Common myeloid progenitor, CD34-positive (primary cell): ENCODE measurements at regions of chr7 and their contacts with region 1.

Region 1: DNA sequence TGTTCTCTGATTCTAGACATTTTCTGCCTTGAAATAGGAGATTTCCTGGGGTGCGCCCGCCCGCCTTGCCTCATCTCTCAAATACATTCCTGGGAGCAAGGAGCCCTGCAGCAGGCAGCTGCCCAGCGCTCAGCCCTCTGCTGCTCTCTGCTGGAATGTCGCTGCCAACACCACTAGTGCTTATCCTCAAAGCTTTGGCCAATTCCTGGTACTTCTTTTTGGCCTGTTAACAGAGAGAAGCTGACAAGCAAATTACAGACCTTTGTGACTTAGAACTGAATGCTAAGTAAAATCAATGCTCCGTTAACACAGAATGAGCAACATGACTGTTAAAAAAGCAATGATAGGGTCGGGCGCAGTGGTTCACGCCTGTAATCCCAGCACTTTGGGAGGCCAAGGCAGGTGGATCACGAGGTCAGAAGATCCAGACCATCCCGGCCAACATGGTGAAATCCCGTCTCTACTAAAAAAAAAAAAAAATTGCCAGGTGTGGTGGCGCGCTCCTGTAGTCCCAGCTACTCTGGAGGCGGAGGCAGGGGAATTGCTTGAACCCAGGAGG is 41.9 kb upstream of the SYPL1 start:
- DNase-seq: peak; percentile 79 to 87 (median 85)
- H3K4me3 ChIP-seq: peak overlapping the region in 4 of 7 experiments; percentile 30 to 74 (median 60)
- H3K27ac ChIP-seq: no peak overlapping the region
- H3K4me1 ChIP-seq: peaks cover 0 to 19% (median 15%) of the 10 kb centered on the region in 4 experiments
- H3K27me3 ChIP-seq: no peaks in the 10 kb centered on the region

Region 2: DNA sequence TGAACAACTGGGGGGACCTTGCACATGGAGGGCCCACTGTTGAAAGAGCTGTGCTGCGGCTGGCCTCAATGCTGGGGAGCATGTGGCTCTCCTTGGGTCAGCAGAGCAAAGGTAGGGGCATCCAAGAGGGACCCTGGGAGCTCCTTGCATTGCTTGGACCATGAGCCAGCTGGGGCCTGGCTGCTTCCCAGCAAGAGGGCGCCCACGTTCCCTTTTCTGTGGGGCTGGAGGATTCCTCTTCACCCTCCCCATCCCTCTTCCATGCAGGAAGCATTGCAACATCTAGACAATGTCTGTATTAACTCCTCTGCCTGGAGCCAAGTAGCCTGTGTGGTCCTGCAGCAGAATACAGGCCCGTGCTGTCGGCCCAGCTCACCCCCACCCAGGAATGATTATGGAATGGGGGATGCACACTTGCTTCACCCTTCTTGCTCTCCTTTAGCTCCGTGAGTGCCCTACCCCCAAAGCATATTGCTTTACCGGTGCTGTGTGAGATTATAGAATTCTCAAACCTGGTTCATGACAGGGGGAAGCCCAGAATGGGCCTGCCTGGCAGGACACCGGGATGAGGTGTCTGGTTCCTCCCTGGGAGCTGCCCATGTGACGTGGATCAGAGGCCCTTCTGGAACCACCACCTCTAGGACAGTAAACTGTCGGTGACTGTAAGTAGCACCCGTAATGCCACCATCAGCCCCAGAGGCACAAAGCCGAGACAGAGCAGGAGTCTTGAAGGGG is 103.8 kb before region 1 on chr7:
- CTCF ChIA-PET with region 1: interaction called, 176 read pairs
- POLR2A ChIA-PET with region 1: no interaction called
- DNase-seq: no peak
- H3K4me3 ChIP-seq: no peak overlapping the region
- H3K27ac ChIP-seq: no peak overlapping the region
- H3K4me1 ChIP-seq: peaks cover 0 to 2% (median 2%) of the 10 kb centered on the region in 4 experiments
- H3K27me3 ChIP-seq: peaks cover 0 to 7% (median 2%) of the 10 kb centered on the region in 5 experiments

Region 3: DNA sequence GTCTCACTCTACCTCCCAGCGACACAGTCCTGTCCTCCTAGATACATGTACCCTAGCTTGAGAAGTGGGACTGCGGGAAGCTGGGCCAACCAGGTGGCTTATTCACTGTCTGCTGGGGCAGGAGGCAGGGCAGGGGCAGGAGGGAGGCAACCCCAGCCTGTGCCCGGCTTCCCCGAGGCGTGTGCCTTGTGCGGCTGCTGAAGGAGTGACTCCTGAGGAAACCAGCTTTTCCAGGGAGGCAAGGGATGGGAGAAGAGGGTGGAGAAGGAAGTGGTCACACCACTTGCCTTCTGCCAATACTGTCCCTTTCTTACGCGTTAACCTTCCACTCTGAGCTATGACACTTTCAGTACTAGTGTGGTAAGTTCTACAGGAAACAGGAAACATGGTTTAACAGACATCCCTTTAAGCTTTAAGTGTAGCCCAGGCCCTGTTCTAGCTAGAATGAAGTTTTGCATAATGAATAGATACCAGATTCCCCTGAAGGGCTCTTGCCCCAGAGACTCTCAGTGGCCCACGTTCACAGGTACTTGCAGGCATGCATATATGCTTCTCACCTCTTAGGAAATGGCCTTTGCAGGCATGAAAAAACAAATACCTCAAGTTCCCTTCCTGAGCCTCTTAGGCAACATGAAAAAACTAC is 82.5 kb before region 1 on chr7:
- CTCF ChIA-PET with region 1: interaction called, 16 read pairs
- POLR2A ChIA-PET with region 1: no interaction called
- DNase-seq: peak; percentile 85 to 97 (median 93)
- H3K4me3 ChIP-seq: peak overlapping the region in 5 of 7 experiments; percentile 27 to 65 (median 58)
- H3K27ac ChIP-seq: peak overlapping the region; percentile 89 to 93
- H3K4me1 ChIP-seq: peaks cover 32 to 86% (median 74%) of the 10 kb centered on the region in 4 experiments
- H3K27me3 ChIP-seq: no peaks in the 10 kb centered on the region

Region 4: DNA sequence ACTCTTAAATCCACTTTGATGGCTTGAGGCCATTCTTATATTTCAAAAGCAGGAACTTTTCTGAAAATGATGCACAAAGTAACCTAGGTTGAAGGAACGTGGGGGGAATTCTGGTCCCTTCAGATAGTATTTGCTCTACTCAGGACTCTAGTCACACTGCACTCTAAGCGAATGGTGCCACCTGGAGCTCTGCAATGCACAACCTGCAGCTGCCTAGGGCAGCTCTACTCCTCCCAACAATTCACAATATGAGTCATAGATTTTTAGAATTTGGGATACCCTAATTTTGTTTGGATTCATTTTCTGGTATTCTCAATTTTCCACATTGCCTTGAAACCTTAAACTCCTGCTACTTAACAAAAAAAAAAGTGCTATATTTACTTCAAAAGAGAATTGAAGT is 59.2 kb before region 1 on chr7:
- CTCF ChIA-PET with region 1: interaction called, 24 read pairs
- POLR2A ChIA-PET with region 1: no interaction called
- DNase-seq: no peak
- H3K4me3 ChIP-seq: no peak overlapping the region
- H3K27ac ChIP-seq: no peak overlapping the region
- H3K4me1 ChIP-seq: peaks cover 0 to 2% (median 0%) of the 10 kb centered on the region in 4 experiments
- H3K27me3 ChIP-seq: no peaks in the 10 kb centered on the region

Region 5: DNA sequence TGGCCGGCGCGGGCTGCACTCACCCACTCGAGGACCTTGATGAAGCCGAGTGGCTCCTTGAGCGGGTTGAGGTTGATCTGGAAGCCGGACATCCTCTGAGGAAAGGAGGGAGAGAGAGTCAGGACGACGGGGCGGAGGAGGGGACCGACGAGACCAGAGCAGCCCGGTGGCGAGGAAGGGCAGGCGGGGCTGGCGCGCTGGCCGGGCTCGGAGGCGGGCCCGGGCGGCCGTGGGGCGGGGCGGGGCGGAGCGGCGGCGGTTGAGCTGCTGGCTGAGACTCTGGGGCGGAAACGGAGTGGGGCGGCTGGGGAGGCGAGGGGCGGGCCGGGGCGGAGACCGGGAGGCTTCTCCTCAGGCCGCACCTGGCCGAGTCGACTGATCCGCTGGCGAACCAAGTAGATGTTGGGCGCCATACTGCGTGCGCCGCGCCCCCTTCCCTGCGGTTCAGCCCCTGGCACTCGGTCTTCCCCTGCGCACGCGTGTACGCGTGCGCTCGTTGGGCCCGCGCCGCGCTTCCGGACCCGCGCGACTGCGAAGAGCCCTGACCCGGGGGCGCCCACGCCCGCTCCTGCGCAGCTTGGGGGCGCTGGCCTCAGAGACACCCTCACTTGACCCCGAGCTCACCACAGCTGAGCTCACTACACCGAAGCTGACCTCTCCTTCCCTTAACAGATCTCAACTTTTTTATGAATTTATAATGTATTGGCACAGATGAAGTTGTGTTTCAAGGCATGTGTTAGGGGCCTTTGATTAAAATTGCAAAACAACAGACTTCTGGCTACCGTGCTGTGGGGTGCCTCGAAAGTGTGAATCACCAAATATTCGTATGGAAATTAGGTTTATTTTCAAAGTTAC is 41.6 kb before region 1 on chr7 and contains the start of gene SYPL1:
- CTCF ChIA-PET with region 1: interaction called, 10 read pairs
- POLR2A ChIA-PET with region 1: interaction called, 3 read pairs
- DNase-seq: peak; percentile 96 to 98 (median 97)
- H3K4me3 ChIP-seq: peak within 1 kb of the TSS; percentile 83 to 97 (median 91)
- H3K27ac ChIP-seq: peak within 1 kb of the TSS; percentile 91 to 95
- H3K4me1 ChIP-seq: peaks cover 42 to 69% (median 60%) of the 10 kb centered on the region in 4 experiments
- H3K27me3 ChIP-seq: no peaks in the 10 kb centered on the region

Region 6: DNA sequence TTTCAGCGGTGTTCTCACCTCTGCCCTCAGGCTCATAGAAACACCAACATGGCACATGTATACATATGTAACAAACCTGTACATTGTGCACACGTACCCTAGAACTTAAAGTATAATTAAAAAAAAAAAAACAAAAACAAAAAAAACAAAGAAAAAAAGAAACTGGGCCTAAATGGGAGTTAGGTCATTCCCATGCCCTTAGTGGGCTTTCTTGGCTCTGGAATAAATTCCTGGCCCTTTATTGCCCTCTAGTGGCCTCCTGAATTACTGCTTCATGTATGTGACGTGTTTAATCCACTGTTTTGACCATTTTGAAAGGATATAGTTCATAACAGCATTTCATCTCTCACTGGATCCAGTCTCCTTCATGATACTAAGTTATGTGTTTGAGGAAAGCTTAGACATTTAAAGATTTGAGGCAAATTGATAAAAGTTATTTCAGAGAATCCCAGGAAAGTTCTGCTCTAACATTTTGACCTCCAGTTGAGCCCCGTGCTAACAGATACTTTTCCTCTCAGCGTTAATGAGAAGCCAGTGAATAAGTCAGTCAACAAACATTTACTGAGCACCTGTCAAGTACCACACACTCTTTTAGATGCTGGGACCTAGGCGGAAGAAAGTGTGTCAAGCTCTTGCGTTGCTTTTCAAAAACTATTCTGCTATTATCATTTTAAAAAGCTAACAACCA is 12.8 kb after region 1 on chr7:
- CTCF ChIA-PET with region 1: interaction called, 49 read pairs
- POLR2A ChIA-PET with region 1: interaction called, 5 read pairs
- DNase-seq: peak; percentile 73 to 81 (median 76)
- H3K4me3 ChIP-seq: no peak overlapping the region
- H3K27ac ChIP-seq: no peak overlapping the region
- H3K4me1 ChIP-seq: no peaks in the 10 kb centered on the region
- H3K27me3 ChIP-seq: no peaks in the 10 kb centered on the region